Psoas muscle (tissue), 8 donors: ENCODE measurements at regions of chrX and their contacts with region 1.

Region 1: GRCh38 chrX:23317799-23318724 is 16.6 kb upstream of the PTCHD1 start:
- DNase-seq: no peak
- ATAC-seq: peak in 2 of 4 donors; percentile 54 to 65
- H3K4me3 ChIP-seq: no peak overlapping the region
- H3K27ac ChIP-seq: no peak overlapping the region
- H3K4me1 ChIP-seq: no peaks in the 10 kb centered on the region
- H3K27me3 ChIP-seq: no peaks in the 10 kb centered on the region
- CTCF ChIP-seq: peak; percentile 58

Region 2: DNA sequence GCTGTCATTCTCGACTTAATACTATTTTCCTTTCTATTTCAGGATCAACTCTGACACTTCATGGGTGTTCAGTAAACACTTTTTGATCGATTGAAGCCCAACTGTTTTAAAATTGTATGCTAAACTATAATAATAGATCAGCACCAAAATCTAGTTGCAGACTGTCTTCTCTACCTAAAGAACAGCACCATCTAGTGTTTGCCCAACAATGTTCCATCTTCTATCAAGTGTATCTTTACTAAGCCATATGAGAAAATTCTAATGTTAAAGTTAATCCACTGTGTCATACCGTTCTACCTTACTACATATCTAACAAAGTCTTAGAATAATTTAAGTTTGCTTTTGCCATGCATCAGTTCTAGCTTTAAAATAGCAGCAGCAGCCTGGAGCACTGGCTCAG is 236.2 kb after region 1 on chrX:
- intact Hi-C with region 1: loop called in 1 of 2 experiments (anchors 10 kb)
- DNase-seq: no peak
- ATAC-seq: no peak
- H3K4me3 ChIP-seq: no peak overlapping the region
- H3K27ac ChIP-seq: no peak overlapping the region
- H3K4me1 ChIP-seq: no peaks in the 10 kb centered on the region
- H3K27me3 ChIP-seq: no peaks in the 10 kb centered on the region
- CTCF ChIP-seq: peak; percentile 55